AG04449 (cell line): ENCODE measurements at regions of chr19 and their contacts with region 1.

Region 1: GRCh38 chr19:1026189-1027019 is at the start of gene CNN2:
- DNase-seq: no peak
- H3K4me3 ChIP-seq: peak within 1 kb of the TSS; percentile 96
- CTCF ChIP-seq: no peak

Region 2: DNA sequence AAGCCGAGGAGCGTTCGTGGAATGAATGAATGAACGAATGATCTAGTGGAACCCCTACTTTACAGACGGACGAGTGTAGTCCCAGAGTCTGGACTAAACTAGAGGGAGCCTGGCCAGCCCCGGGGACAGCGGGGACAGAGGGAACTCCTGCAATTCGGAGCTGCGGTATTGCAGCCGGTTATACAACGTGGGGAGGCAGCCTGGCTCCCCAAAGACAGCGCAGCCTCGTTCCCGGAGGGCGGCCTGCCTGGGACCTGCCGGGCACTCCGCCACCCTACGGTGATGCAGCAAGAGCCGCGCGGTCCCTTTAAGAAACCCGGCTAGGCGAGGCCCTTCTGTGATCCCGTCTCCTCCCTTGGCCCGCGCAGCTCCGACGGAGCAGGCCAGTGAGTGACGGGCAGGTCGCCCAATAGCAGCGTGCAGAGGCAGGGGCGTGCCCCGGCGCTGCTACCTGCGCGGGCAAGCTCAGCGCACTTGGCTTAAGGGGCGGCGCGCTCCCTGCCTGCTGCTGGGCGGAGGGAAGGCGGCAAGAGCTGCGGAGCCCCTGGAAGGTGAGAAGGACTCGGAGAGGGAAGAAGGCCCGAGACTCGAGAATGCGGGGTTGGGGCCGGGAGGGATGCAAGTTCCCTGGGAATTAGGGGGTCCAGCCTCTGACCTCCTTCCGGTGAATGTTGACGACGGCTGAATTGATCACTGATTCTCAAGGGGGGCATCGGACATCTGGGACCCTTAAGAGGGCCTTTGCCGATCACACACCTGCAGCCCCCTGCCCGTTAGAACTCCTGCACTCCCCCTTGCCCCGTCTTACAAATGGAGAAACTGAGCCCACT is 13.5 kb after region 1 on chr19 and contains the start of gene ABCA7:
- CTCF ChIA-PET with region 1: interaction called, 7 read pairs
- POLR2A ChIA-PET with region 1: interaction called, 104 read pairs
- DNase-seq: peak; percentile 84
- H3K4me3 ChIP-seq: peak within 1 kb of the TSS; percentile 57
- CTCF ChIP-seq: peak; percentile 0

Region 3: GRCh38 chr19:1103708-1104310 is 77.4 kb after region 1 on chr19 and contains the start of gene GPX4:
- CTCF ChIA-PET with region 1: interaction called, 3 read pairs
- POLR2A ChIA-PET with region 1: interaction called, 41 read pairs
- DNase-seq: peak; percentile 93
- H3K4me3 ChIP-seq: peak within 1 kb of the TSS; percentile 78
- CTCF ChIP-seq: no peak